Posterior vena cava (tissue), 2 donors: ENCODE measurements at regions of chr15 and their contacts with region 1.

Region 1: DNA sequence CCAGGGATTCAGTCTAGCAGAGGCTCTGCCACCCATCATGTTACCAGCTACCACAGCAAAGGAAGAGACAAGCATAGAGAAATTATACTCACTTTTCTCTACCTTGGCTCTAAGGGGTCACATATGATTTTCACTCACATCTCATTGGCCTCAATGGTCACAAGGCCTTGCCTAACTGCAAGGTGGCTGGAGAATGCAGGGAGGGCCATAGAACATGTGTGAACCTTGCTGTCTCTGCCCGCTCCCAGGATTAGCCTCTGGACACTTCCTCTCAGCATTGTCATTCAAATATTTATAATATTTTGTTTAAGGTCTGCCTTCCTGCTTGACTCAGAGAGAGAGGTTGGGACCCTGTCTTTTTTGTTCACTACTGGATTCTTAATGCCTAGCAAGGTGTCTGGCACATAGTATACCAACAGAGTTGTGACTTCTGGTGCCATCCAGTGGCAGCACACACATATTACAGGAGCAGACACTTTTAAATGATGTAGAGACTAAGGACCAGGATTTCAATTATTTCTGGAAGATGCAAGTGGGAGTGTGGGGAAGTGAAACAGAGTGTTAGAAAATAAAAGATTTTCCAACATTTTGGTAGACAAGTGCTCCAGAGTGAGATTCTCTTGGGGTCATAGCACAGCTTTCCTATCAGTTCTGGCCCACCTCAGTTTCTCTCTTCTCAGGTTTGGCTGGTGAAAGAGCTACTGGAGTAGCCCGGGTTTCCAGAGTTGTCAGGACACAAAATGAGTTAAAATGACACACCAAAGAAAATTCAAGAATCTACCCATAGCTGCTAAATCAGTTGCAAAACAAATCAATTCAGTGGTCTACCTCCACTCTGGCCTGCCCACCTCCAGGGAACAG is 119.0 kb upstream of the RASGRP1 start:
- DNase-seq: no peak

Region 2: DNA sequence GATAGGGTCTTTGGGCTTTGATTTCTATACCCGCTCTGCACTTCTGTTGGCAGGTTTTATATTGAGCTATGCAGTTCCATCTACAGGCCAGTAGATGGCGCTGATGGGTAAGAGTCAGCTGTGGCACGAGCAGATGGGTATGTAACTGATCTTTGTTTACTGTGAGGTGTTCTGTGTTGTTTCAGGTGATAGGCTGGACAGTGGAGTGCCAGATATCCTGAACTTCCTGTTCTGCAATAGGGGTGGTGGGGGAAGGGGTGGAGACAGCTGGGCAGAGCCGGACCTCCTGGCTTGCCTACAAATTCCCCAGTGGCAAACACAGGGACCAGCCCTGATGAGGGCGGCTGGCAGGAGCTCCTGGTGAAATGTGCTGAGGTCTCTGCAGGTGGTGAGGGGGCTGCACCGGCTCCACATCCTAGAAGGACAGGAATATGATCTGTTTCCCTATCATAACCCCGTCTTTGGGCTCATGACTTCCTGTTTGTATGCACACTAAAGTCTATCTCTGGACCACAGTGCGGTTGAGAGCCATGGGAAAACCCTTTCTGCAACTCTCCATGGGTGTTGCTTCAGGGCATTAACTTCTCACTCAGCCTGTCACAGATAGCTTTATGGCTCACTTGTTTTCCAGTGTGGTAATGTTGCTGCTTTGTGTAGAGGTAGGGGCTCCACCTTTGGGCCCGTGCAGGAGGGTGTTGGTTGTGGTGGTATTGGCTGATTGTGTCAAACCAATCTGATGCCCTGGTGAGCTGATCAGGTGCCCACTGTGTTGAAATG is 243.1 kb before region 1 on chr15:
- intact Hi-C with region 1: loop called in 1 of 2 experiments (anchors 10 kb)
- DNase-seq: no peak

Region 3: DNA sequence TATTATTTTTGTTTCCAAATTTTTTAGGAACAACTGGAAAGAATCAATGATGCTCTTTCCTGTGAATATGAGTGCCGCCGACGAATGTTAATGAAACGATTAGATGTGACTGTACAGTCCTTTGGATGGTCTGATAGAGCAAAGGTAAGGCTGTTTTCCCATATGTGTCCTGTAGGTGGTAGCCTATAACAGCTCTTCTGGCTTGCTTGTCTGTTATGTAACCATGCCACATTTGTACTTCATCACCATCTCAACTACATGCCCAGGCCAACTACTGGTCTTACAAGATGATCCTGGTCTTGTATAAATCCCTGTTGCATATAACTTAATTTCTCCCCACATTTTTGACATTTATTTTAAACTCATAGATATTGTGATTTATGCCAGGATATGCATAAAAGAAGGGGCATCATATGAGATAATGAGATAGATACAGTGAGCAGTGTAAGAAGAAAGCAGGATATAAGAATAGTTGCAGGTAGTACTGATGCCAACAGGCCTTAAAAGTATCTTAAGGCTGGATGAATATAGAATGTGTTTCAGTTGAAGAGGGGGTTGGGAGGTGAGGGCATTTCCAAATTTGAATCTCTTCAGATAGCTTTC is 209.4 kb before region 1 on chr15:
- intact Hi-C with region 1: loop called in 1 of 2 experiments (anchors 10 kb)
- DNase-seq: no peak

Region 4: DNA sequence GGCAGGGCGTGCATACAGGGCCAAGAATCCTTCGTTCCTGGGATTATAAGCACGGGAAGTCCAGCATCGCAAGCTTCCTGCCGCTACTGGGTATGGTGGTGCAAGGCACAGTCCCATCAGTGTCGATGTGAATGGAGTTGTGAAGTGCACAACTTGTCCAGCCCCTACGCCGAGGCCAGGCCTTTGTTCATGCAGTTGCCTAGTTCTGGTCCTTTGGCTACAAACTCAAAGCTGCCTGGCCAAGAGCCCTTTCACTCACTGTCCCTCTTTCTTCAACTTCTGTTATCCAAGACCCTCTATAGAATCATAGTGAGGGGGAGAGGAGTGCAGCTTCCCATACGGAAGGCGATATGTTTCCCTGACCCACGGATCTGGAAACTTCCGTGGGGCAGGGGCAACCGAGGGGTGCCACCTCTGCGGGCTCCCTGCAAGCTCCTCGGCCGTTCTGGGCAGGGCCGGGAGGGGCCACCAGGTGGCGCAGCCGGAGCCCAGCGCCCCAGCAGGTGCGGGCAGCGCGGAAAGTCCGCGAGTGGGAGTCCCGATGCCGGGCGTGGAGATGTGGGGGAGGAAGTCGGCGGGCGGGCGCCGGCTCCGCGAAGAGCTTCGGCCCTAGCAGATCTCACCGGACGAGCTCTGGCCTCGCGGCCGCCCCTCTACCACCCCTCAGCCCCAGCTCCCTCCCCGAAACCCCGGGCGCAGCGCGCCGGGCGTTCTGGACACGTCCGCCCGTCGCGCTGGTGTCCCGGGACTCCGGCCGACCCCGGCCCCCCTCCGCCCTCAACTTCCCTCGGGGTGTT is 119.7 kb before region 1 on chr15:
- intact Hi-C with region 1: loop called in 1 of 2 experiments (anchors 10 kb)
- DNase-seq: peak; percentile 91

Region 5: DNA sequence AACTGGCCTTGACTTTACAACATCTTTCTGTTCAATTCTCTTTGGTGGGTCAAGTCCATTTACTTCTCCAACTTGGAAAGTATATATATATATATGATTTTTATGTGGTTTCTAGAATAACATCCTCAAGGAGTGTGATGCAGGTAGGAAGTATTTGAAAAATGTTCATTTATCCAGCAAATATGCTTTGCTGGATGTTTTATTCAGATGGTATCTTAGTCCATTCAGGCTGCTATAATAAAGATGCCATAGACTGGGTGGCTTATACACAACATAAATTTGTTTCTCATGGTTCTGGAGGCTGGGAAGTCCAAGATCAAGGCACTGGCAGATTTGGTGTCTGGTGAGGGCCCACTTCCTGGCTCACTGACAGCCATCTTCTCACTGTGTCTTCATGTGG is 49.7 kb after region 1 on chr15:
- intact Hi-C with region 1: no loop called
- DNase-seq: no peak

Region 6: DNA sequence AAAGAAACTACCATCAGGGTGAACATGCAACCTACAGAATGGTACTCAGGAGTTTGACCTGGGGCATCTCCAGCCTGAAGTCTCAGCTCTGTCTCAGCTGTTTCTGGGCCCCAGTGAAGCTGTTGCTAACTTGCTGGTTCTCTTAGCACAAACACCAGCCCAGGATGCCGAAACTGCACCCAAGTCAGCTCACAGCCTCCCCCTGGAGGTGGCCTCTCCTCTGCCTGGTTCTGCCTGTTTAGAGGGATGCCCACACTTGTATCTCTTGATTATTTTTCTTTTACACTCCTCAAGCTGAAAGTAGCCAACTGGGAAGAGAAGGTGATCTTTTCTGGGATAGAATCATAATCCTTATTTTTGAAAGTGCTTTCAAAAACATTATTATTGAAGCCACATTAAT is 170.0 kb after region 1 on chr15:
- intact Hi-C with region 1: no loop called
- DNase-seq: no peak